ENCODE measurements at regions of chr16 and their contacts with region 1.

Region 1: GRCh38 chr16:67841764-67842508 is at the start of gene THAP11:
- DNase-seq: peak; percentile 97
- ATAC-seq: peak; percentile 55
- H3K4me3 Mint-ChIP-seq: peak within 1 kb of the TSS; percentile 94
- H3K27ac Mint-ChIP-seq: peak within 1 kb of the TSS; percentile 97
- H3K4me1 Mint-ChIP-seq: peaks cover 33% of the 10 kb centered on the region
- H3K27me3 Mint-ChIP-seq: no peaks in the 10 kb centered on the region
- total RNA-seq, gene THAP11: 31.8 to 34.5 TPM

Region 2: DNA sequence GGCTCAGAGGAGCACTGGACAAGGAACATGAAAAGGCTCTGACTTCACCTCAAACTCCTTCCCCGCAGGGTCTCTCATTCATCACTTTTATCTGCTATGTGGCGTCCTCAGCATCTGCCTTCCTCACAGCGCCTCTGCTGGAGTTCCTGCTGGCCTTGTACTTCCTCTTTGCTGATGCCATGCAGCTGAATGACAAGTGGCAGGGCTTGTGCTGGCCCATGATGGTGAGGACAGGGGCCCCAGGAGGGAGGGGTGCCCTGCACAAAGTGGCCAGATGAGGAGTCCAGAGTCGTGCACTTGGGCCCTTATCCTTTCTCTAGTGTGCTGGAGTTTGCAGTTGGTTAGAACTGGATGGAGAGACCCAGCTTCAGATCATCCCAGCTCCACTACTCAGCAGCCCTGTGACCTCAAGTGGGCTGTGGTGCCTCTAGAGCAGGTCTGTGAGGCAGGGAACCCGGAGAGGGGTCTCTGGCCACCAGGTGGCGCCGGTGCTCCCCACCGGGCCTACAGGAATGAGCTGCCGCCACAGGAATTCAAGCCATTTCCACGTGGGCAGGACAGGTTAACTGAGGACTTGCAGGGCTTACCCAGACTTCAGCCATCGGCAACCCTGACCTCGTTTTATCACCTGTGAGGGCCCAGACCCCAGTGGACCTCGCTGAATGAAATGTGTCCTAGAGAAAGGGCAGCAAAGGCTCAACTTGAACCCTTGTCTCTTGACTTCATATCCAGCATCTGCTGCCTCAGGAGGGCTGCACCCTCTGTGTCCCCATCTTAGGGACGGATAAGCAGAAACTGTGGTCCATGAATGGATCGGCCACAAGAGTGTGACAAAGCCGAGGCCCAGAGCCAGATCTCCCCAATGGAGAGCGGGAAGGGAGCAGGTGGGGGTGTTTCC is 1233.4 kb before region 1 on chr16:
- CTCF ChIA-PET with region 1: no interaction called
- POLR2A ChIA-PET with region 1: no interaction called
- intact Hi-C with region 1: no loop called
- DNase-seq: peak; percentile 92
- ATAC-seq: peak; percentile 50
- H3K4me3 Mint-ChIP-seq: no peak overlapping the region
- H3K27ac Mint-ChIP-seq: peak overlapping the region; percentile 78
- H3K4me1 Mint-ChIP-seq: peaks cover 35% of the 10 kb centered on the region
- H3K27me3 Mint-ChIP-seq: no peaks in the 10 kb centered on the region

Region 3: GRCh38 chr16:67667817-67668494 is 174.0 kb before region 1 on chr16:
- CTCF ChIA-PET with region 1: interaction called, 3 read pairs
- POLR2A ChIA-PET with region 1: interaction called, 4 read pairs
- intact Hi-C with region 1: loop called in 1 of 2 experiments (anchors 1 kb)
- DNase-seq: peak; percentile 92
- ATAC-seq: peak; percentile 91
- H3K4me3 Mint-ChIP-seq: no peak overlapping the region
- H3K27ac Mint-ChIP-seq: no peak overlapping the region
- H3K4me1 Mint-ChIP-seq: peaks cover 19% of the 10 kb centered on the region
- H3K27me3 Mint-ChIP-seq: no peaks in the 10 kb centered on the region

Region 4: DNA sequence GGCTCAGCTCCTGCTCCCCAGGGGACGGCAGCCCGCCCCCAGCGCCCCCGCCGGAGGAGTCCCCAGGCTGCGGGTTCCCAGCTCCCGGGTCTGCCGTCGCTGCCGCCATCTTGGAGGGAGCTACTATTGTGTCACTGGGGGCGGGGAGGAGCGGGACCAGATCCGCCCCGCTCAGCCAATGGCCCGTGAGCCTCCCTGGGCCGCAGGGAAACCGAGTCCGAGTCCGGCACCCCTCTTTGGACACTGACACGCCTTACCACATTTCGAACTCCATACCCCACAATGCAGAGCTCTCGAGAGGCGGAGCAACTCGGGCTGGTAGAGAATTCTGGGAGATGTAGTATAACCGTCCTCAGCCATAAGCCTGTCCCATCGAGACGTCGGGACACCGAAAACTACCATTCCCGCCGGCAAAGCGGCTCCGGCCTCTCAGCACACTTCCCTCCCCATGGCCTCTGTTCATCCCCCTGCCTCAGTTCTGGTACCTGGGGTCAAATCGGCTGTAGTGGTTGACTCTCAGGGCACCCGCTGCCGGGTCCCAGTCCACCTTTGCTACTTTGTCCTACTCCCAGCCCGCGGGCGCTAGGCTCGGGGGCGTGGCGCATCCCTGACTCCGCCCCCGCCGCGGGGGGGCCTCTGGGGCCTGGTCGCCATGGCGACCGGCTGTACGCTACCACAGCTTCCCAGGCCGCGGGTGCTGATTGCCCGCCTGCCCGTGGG is 35.3 kb before region 1 on chr16 and contains the starts of genes RANBP10 and TSNAXIP1:
- CTCF ChIA-PET with region 1: interaction called, 11 read pairs
- POLR2A ChIA-PET with region 1: interaction called, 9 read pairs
- intact Hi-C with region 1: loop called (anchors 1 kb)
- DNase-seq: peak; percentile 98
- ATAC-seq: peak; percentile 96
- H3K4me3 Mint-ChIP-seq: peak within 1 kb of the TSS; percentile 91
- H3K27ac Mint-ChIP-seq: peak within 1 kb of the TSS; percentile 91
- H3K4me1 Mint-ChIP-seq: peaks cover 39% of the 10 kb centered on the region
- H3K27me3 Mint-ChIP-seq: no peaks in the 10 kb centered on the region
- total RNA-seq, gene RANBP10: 15.6 to 18.0 TPM
- total RNA-seq, gene TSNAXIP1: 0.62 to 1.1 TPM

Region 5: GRCh38 chr16:67872786-67873537 is 31.0 kb after region 1 on chr16 and contains the start of gene EDC4:
- CTCF ChIA-PET with region 1: interaction called, 3 read pairs
- POLR2A ChIA-PET with region 1: interaction called, 3 read pairs
- intact Hi-C with region 1: loop called (anchors 1 to 2 kb)
- DNase-seq: peak; percentile 92
- ATAC-seq: peak; percentile 89
- H3K4me3 Mint-ChIP-seq: peak within 1 kb of the TSS; percentile 77
- H3K27ac Mint-ChIP-seq: peak within 1 kb of the TSS; percentile 92
- H3K4me1 Mint-ChIP-seq: peaks cover 30% of the 10 kb centered on the region
- H3K27me3 Mint-ChIP-seq: no peaks in the 10 kb centered on the region
- total RNA-seq, gene EDC4: 92.8 to 96.9 TPM

Region 6: DNA sequence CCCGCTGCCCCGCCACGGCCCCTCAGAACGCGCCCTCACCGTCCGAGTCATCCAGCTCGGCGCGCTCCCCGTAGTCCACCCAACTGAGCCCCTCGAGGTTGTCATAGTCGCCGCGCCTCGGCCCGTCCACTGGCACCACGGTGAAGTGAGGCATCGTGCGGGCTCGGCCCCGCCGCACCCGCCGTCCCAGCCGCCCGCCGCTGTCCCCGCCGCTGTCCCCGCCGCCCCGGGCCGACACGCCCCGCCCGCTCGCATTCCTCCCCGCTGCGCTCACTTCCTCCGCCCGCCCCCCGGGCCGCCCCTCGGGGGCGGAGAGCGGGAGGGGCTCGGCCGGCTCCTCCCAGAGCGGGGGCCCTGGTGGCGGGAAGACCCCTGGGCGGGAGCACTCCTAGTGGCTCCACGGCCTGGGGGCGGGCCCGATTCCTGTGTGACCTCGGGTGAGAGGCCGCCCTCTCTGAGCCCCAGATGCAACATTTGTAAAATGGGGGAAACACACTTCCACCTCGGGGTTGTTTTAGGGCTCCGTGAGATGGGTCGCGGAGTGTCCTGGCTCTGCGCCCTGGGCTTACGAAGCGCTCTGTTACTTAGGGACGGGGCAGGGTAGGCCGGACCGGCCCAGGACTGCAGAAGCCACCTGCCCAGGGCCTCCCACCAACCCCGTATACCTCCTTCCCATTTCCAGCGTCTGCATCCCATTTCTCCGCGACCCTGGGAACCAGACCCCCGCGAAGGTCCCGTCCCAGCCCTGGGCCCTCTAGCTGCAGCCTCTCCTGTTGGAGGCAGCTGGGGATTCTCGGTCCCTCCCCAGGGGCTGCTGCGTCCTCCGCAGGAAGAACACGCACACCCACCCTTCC is 126.7 kb after region 1 on chr16 and contains the start of gene SLC12A4:
- CTCF ChIA-PET with region 1: interaction called, 4 read pairs
- POLR2A ChIA-PET with region 1: no interaction called
- intact Hi-C with region 1: loop called in 1 of 2 experiments (anchors 2 kb)
- DNase-seq: peak; percentile 94
- ATAC-seq: peak; percentile 90
- H3K4me3 Mint-ChIP-seq: peak within 1 kb of the TSS; percentile 84
- H3K27ac Mint-ChIP-seq: peak within 1 kb of the TSS; percentile 80
- H3K4me1 Mint-ChIP-seq: peaks cover 14% of the 10 kb centered on the region
- H3K27me3 Mint-ChIP-seq: no peaks in the 10 kb centered on the region
- total RNA-seq, gene SLC12A4: 21.8 to 25.8 TPM

Region 7: DNA sequence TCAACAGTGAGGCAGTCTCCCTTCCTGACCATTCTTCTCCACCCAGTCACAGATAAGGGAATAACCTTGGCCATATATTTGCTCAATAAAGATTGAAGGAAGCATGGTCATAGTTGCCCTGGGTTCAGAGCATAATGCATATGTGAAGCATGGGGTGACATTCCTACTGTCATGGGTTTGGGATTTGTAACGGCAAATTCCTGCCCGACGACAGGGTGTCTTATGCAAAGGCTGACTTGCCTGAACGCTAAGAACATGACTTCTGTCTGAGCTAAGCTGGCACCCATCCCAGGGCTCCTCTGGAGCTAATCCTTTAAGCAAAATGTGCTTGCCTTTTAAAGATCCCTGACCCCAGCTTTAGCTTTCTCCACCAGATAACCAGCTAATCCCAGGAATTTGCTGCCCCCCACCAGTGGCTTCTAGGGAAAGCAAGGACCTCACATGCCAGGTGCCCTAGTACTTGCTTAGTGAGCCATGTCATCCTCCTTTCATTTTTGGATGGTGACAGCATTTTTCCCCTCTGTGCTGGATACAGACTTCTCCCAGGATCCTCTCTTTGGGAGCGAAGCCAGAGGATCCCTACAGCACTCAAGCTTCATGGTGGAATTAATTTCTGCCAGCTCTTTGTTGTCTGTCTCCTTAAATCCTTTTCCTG is 457.1 kb after region 1 on chr16:
- CTCF ChIA-PET with region 1: no interaction called
- POLR2A ChIA-PET with region 1: no interaction called
- intact Hi-C with region 1: no loop called
- DNase-seq: no peak
- ATAC-seq: no peak
- H3K4me3 Mint-ChIP-seq: no peak overlapping the region
- H3K27ac Mint-ChIP-seq: peak overlapping the region; percentile 55
- H3K4me1 Mint-ChIP-seq: peaks cover 13% of the 10 kb centered on the region
- H3K27me3 Mint-ChIP-seq: no peaks in the 10 kb centered on the region

Region 8: GRCh38 chr16:68310761-68311511 is 469.0 kb after region 1 on chr16 and contains the starts of genes PRMT7 and SLC7A6OS:
- CTCF ChIA-PET with region 1: no interaction called
- POLR2A ChIA-PET with region 1: no interaction called
- intact Hi-C with region 1: loop called in 1 of 2 experiments (anchors 1 kb)
- DNase-seq: peak; percentile 97
- ATAC-seq: peak; percentile 99
- H3K4me3 Mint-ChIP-seq: peak within 1 kb of the TSS; percentile 90
- H3K27ac Mint-ChIP-seq: peak within 1 kb of the TSS; percentile 92
- H3K4me1 Mint-ChIP-seq: peaks cover 42% of the 10 kb centered on the region
- H3K27me3 Mint-ChIP-seq: no peaks in the 10 kb centered on the region
- total RNA-seq, gene PRMT7: 62.7 to 70.7 TPM
- total RNA-seq, gene SLC7A6OS: 17.4 to 21.7 TPM